CD8-positive, alpha-beta T cell (primary cell): ENCODE measurements at regions of chr12 and their contacts with region 1.

Region 1: GRCh38 chr12:123540899-123541662 is 7.6 kb upstream of the RILPL1 start:
- DNase-seq: no peak
- ATAC-seq: no peak
- H3K4me3 ChIP-seq: no peak overlapping the region
- H3K4me3 Mint-ChIP-seq: no peak overlapping the region
- H3K27ac ChIP-seq: no peak overlapping the region
- H3K27ac Mint-ChIP-seq: no peak overlapping the region
- H3K4me1 ChIP-seq: no peaks in the 10 kb centered on the region
- H3K4me1 Mint-ChIP-seq: no peaks in the 10 kb centered on the region
- H3K27me3 ChIP-seq: no peaks in the 10 kb centered on the region
- H3K27me3 Mint-ChIP-seq: peaks cover 4% of the 10 kb centered on the region
- CTCF ChIP-seq: no peak

Region 2: DNA sequence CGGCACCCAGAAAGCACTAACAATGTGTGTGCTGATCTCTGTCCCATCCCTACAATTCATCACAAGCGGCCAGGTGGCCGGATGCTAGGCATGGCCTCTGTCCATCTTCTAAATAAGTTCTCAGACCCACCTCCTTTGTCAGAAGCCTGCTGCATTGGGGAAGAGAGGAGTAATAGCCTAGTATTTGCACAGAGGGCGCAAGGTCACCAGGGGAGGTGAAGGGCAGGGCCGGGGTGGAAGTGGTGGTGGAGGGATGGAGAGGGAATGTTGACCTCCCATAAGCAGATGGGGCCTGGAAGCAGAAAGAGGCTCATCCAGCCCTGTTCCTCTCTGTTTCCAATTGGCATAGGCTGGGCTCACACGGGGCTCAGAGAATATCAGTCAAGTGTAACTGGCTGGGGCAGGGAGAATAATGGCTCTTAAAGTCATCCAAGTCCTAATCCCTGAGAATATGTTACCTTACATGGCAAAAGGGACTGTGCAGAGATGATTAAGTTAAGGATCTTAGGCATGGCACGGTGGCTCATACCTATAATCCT is 14.5 kb before region 1 on chr12:
- CTCF ChIA-PET with region 1: no interaction called
- POLR2A ChIA-PET with region 1: no interaction called
- intact Hi-C with region 1: loop called in 1 of 2 experiments (anchors 1 kb)
- DNase-seq: no peak
- ATAC-seq: no peak
- H3K4me3 ChIP-seq: no peak overlapping the region
- H3K4me3 Mint-ChIP-seq: no peak overlapping the region
- H3K27ac ChIP-seq: no peak overlapping the region
- H3K27ac Mint-ChIP-seq: no peak overlapping the region
- H3K4me1 ChIP-seq: no peaks in the 10 kb centered on the region
- H3K4me1 Mint-ChIP-seq: peaks cover 2% of the 10 kb centered on the region
- H3K27me3 ChIP-seq: no peaks in the 10 kb centered on the region
- H3K27me3 Mint-ChIP-seq: no peaks in the 10 kb centered on the region
- CTCF ChIP-seq: no peak

Region 3: DNA sequence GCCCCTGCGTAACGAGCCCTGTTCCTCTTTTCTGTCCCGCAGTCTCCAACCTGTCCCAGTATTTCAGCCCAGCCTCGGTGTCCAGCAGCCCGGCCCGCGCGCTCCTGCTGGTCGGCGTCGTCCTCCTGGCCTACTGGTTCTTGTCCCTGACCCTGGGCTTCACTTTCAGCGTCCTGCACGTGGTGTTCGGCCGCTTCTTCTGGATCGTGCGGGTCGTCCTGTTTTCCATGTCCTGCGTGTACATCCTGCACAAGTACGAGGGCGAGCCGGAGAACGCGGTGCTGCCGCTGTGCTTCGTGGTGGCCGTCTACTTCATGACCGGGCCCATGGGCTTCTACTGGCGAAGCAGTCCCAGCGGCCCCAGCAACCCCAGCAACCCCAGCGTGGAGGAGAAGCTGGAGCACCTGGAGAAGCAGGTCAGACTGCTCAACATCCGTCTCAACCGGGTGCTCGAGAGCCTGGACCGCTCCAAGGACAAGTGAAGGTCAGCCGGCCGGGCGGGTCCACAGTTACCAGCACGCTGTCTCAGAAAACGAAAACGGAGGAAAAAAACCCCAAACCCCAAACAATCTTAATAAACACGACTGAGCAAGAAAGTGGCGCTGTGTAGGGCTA is 1484.0 kb after region 1 on chr12:
- CTCF ChIA-PET with region 1: no interaction called
- POLR2A ChIA-PET with region 1: no interaction called
- intact Hi-C with region 1: no loop called
- DNase-seq: no peak
- ATAC-seq: no peak
- H3K4me3 ChIP-seq: no peak overlapping the region
- H3K4me3 Mint-ChIP-seq: no peak overlapping the region
- H3K27ac ChIP-seq: no peak overlapping the region
- H3K27ac Mint-ChIP-seq: no peak overlapping the region
- H3K4me1 ChIP-seq: no peaks in the 10 kb centered on the region
- H3K4me1 Mint-ChIP-seq: no peaks in the 10 kb centered on the region
- H3K27me3 ChIP-seq: no peaks in the 10 kb centered on the region
- H3K27me3 Mint-ChIP-seq: no peaks in the 10 kb centered on the region
- CTCF ChIP-seq: no peak